Sigmoid colon (tissue), 7 donors: ENCODE measurements at regions of chr11 and their contacts with region 1.

Region 1: GRCh38 chr11:18321980-18322711 is at the starts of genes GTF2H1 and HPS5:
- DNase-seq: peak; percentile 99
- H3K4me3 ChIP-seq: peak within 1 kb of the TSS; percentile 78 to 91 (median 80)
- H3K27ac ChIP-seq: peak within 1 kb of the TSS; percentile 91 to 96 (median 94)
- H3K4me1 ChIP-seq: peaks cover 0 to 44% (median 37%) of the 10 kb centered on the region in 4 donors
- H3K27me3 ChIP-seq: no peaks in the 10 kb centered on the region
- CTCF ChIP-seq: no peak
- EP300 ChIP-seq: peak in 3 of 4 donors; percentile 47 to 96 (median 61)
- POLR2A ChIP-seq: peak; percentile 77 to 90
- total RNA-seq, gene GTF2H1: 50.2 to 61.0 (median 52.6) TPM
- total RNA-seq, gene HPS5: 17.7 to 28.5 (median 23.0) TPM

Region 2: DNA sequence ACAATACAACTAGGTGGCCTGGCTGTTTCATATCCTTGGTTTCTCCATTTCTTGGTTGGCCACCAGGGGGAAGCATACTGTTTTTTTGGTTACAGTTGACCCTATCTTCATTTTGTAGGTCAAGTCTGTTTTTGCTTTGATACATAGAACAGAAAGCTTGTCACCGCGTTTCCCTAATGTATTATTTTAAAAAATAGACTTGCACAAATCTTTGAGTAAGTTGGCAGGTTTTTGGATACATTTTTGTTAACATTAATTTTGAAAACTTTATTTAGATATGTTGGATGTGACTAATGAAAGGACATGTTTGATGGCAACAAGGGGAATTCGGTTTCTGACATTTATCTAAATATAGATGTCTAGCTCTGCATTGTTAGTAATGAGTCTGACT is 967.5 kb before region 1 on chr11:
- intact Hi-C with region 1: loop called (anchors 5 kb)
- DNase-seq: peak; percentile 72
- H3K4me3 ChIP-seq: no peak overlapping the region
- H3K27ac ChIP-seq: no peak overlapping the region
- H3K4me1 ChIP-seq: peaks cover 0 to 31% (median 23%) of the 10 kb centered on the region in 4 donors
- H3K27me3 ChIP-seq: no peaks in the 10 kb centered on the region
- CTCF ChIP-seq: peak in 3 of 4 experiments; percentile 38 to 54 (median 42)
- EP300 ChIP-seq: no peak
- POLR2A ChIP-seq: no peak

Region 3: GRCh38 chr11:18105802-18106574 is 216.2 kb before region 1 on chr11 and contains the start of gene SAAL1:
- intact Hi-C with region 1: loop called (anchors 10 kb)
- DNase-seq: peak; percentile 89
- H3K4me3 ChIP-seq: peak within 1 kb of the TSS; percentile 73 to 85 (median 82)
- H3K27ac ChIP-seq: peak within 1 kb of the TSS; percentile 55 to 75 (median 72)
- H3K4me1 ChIP-seq: peaks cover 0 to 22% (median 12%) of the 10 kb centered on the region in 4 donors
- H3K27me3 ChIP-seq: no peaks in the 10 kb centered on the region
- CTCF ChIP-seq: peak; percentile 18 to 41 (median 37)
- EP300 ChIP-seq: no peak
- POLR2A ChIP-seq: peak; percentile 37 to 43
- total RNA-seq, gene SAAL1: 8.7 to 14.4 (median 11.0) TPM

Region 4: GRCh38 chr11:18526521-18527296 is 204.6 kb after region 1 on chr11 and contains the start of gene TSG101:
- intact Hi-C with region 1: loop called (anchors 1 kb)
- DNase-seq: peak; percentile 95
- H3K4me3 ChIP-seq: peak within 1 kb of the TSS; percentile 82 to 95 (median 90)
- H3K27ac ChIP-seq: peak within 1 kb of the TSS; percentile 88 to 95 (median 92)
- H3K4me1 ChIP-seq: peaks cover 0 to 27% (median 22%) of the 10 kb centered on the region in 4 donors
- H3K27me3 ChIP-seq: no peaks in the 10 kb centered on the region
- CTCF ChIP-seq: no peak
- EP300 ChIP-seq: peak in 1 of 4 donors; percentile 14
- POLR2A ChIP-seq: peak; percentile 91 to 93
- total RNA-seq, gene TSG101: 70.3 to 100 (median 89.8) TPM

Region 5: DNA sequence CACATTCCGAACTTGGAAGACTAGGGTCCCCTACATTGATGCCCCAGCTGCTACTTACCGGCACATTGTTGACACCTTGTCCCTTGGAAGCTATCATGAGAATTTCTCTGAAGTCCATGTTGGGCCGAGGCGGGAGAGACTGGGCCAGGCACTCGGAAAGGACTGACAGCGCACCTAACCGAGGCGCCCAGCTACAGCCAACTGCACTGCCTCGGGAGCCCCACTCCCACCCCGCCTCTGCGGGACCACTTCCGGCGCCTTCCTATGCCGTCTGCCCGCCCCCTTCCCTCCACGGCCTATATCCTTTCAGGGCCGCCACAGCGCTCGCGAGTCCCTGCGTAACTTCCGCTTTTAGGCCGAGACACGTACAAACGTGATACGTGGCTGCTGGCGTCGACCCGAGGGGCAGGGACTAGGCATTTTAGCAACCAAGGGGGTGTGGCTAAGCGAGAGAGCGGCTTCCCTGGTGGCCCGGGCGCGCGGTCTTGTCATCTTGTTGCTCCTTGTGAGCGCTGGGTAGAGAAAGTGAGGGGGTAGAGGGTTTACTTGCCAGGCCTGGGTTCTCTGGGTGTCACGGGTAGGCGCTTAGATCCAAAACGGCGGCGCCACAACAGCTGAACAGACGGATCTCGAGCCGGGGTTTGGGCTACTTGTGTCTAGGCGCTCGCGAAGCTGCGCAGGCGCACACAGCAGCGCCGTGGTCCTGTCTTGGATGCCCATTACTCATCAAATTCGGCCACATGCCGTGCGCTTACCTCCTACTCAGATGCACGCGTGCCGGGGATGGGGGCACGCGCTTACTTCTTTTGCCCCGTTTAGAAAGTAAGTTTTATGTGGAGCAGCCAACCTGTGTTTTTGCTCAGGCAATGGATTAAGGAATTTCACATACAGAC is 312.2 kb after region 1 on chr11 and contains the start of gene SPTY2D1:
- intact Hi-C with region 1: loop called (anchors 5 kb)
- DNase-seq: peak; percentile 100
- H3K4me3 ChIP-seq: peak within 1 kb of the TSS; percentile 57 to 74 (median 68)
- H3K27ac ChIP-seq: peak within 1 kb of the TSS; percentile 90 to 95 (median 92)
- H3K4me1 ChIP-seq: peaks cover 0 to 24% (median 16%) of the 10 kb centered on the region in 4 donors
- H3K27me3 ChIP-seq: no peaks in the 10 kb centered on the region
- CTCF ChIP-seq: no peak
- EP300 ChIP-seq: peak in 1 of 4 donors; percentile 86
- POLR2A ChIP-seq: peak; percentile 91 to 93
- total RNA-seq, gene SPTY2D1: 9.6 to 16.3 (median 12.4) TPM

Region 6: GRCh38 chr11:18698341-18699268 is 376.5 kb after region 1 on chr11 and contains the start of gene TMEM86A:
- intact Hi-C with region 1: loop called (anchors 2 kb)
- DNase-seq: peak; percentile 97
- H3K4me3 ChIP-seq: peak within 1 kb of the TSS; percentile 62 to 98 (median 78)
- H3K27ac ChIP-seq: peak within 1 kb of the TSS; percentile 76 to 82 (median 77)
- H3K4me1 ChIP-seq: peaks cover 3 to 18% (median 15%) of the 10 kb centered on the region in 4 donors
- H3K27me3 ChIP-seq: no peaks in the 10 kb centered on the region
- CTCF ChIP-seq: no peak
- EP300 ChIP-seq: no peak
- POLR2A ChIP-seq: peak in 1 of 2 donors; percentile 43
- total RNA-seq, gene TMEM86A: 3.7 to 5.3 (median 4.8) TPM

Region 7: DNA sequence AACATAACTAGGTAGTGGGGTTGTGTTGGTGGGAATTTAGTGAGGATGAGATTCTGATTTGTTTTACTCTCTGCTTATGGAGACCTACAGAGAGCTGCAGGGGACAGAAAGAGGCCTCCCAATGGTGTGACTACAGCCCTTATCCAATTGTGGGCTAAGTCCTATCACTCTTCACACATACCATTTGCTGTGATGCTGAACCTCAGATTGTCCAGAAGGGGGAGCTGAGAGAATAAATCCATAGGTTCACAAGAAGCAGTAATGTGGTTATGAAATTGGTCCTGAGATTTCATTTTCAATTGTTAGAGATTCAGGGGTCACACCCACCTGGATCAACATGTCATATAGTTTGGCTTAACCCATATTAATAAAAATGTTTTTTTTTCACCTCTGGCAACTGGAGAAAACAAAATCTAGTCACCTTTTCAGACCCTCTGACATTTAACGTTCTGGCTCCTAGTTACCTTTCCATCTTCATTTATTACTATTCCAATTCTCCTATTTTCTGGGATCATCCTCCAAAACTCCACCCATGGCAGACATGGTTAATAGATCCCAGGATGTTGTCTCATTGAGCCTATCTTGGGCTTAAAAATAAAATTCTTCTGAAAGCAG is 522.7 kb after region 1 on chr11:
- intact Hi-C with region 1: no loop called
- DNase-seq: no peak
- H3K4me3 ChIP-seq: no peak overlapping the region
- H3K27ac ChIP-seq: no peak overlapping the region
- H3K4me1 ChIP-seq: no peaks in the 10 kb centered on the region
- H3K27me3 ChIP-seq: no peaks in the 10 kb centered on the region
- CTCF ChIP-seq: no peak
- EP300 ChIP-seq: no peak
- POLR2A ChIP-seq: no peak